Activated CD4-positive, alpha-beta memory T cell treated with anti-CD3 and anti-CD28 coated beads for 36 hours (primary cell): ENCODE measurements at regions of chr4 and their contacts with region 1.

Region 1: DNA sequence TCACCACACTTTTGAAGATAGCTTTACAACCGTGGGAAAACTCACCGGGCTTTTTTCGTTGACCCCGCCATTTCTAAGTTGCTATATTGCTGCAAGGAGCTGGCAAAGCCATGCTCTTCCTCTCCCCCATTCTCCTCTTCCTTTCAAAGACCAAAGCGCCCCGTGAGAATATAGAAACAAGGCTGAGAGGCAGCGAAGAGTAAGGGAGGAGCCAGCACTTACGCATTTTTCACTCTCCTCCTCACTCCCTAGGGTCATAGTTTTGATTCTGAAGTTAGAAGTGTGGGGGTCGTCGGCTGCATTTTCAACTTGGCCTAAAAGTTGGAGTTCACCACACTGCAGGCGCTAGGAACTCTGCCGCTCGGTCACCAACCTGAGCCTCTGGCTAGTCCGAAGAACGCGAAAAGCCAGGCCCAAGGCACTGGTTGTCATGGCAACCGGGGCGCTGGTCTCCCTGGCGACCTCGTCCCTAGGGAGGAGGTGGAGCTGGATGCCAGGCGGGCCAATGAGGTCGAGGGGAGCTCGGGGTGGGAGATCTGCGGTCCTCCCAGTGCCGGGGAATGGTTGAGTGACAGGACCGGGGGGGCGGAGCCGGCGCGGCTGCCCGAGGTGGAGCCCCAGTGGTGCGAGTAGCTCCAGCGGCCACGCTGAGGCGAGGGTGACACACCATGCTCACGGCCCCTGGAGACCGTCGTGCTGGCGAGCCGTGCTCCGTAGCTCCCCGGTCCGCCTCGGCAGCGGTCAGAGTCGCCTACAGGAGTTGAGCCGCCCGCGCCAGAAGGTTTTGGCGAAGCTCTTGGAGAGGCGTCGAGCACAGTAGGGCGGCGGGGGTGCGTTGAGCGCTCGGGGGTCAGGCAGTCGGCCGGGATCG is at the start of gene PTPN13:
- DNase-seq: peak; percentile 84
- H3K4me3 Mint-ChIP-seq: peak within 1 kb of the TSS; percentile 73
- H3K27ac Mint-ChIP-seq: peak within 1 kb of the TSS; percentile 47
- H3K4me1 Mint-ChIP-seq: peaks cover 15% of the 10 kb centered on the region
- H3K27me3 Mint-ChIP-seq: peaks cover 39% of the 10 kb centered on the region
- total RNA-seq, gene PTPN13: 2.7 to 3.2 TPM

Region 2: GRCh38 chr4:85928775-85929591 is 664.9 kb before region 1 on chr4:
- CTCF ChIA-PET with region 1: no interaction called
- POLR2A ChIA-PET with region 1: no interaction called
- intact Hi-C with region 1: no loop called
- DNase-seq: no peak
- H3K4me3 Mint-ChIP-seq: no peak overlapping the region
- H3K27ac Mint-ChIP-seq: no peak overlapping the region
- H3K4me1 Mint-ChIP-seq: no peaks in the 10 kb centered on the region
- H3K27me3 Mint-ChIP-seq: peaks cover 4% of the 10 kb centered on the region

Region 3: GRCh38 chr4:86544310-86544966 is 49.5 kb before region 1 on chr4:
- CTCF ChIA-PET with region 1: no interaction called
- POLR2A ChIA-PET with region 1: interaction called, 3 read pairs
- intact Hi-C with region 1: loop called (anchors 1 kb)
- DNase-seq: no peak
- H3K4me3 Mint-ChIP-seq: no peak overlapping the region
- H3K27ac Mint-ChIP-seq: peak overlapping the region; percentile 79
- H3K4me1 Mint-ChIP-seq: peaks cover 25% of the 10 kb centered on the region
- H3K27me3 Mint-ChIP-seq: no peaks in the 10 kb centered on the region

Region 4: GRCh38 chr4:86557526-86557925 is 36.4 kb before region 1 on chr4:
- CTCF ChIA-PET with region 1: no interaction called
- POLR2A ChIA-PET with region 1: no interaction called
- intact Hi-C with region 1: no loop called
- DNase-seq: no peak
- H3K4me3 Mint-ChIP-seq: no peak overlapping the region
- H3K27ac Mint-ChIP-seq: no peak overlapping the region
- H3K4me1 Mint-ChIP-seq: peaks cover 8% of the 10 kb centered on the region
- H3K27me3 Mint-ChIP-seq: peaks cover 1% of the 10 kb centered on the region

Region 5: DNA sequence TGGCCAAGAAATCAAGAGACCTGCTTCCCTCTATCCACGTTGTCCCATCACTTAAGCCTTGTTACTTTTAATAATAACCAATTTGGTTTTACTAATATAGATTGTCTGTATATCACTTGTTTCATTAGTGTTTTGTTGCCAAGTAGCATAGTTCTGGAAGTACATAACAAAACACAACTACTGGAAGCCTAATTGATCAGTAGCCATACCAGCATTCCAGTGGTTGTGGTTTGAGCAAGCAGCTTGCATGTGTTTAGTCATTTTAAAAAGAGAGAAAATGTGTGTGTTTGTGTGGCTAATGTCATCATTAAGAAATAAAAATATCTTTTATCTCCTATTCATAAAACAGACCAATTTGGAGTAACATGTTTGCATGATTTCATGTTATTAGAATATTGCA is 71.0 kb after region 1 on chr4:
- CTCF ChIA-PET with region 1: no interaction called
- POLR2A ChIA-PET with region 1: no interaction called
- intact Hi-C with region 1: no loop called
- DNase-seq: no peak
- H3K4me3 Mint-ChIP-seq: no peak overlapping the region
- H3K27ac Mint-ChIP-seq: no peak overlapping the region
- H3K4me1 Mint-ChIP-seq: no peaks in the 10 kb centered on the region
- H3K27me3 Mint-ChIP-seq: no peaks in the 10 kb centered on the region